SK-N-SH (cell line): ENCODE measurements at regions of chr2 and their contacts with region 1.

Region 1: DNA sequence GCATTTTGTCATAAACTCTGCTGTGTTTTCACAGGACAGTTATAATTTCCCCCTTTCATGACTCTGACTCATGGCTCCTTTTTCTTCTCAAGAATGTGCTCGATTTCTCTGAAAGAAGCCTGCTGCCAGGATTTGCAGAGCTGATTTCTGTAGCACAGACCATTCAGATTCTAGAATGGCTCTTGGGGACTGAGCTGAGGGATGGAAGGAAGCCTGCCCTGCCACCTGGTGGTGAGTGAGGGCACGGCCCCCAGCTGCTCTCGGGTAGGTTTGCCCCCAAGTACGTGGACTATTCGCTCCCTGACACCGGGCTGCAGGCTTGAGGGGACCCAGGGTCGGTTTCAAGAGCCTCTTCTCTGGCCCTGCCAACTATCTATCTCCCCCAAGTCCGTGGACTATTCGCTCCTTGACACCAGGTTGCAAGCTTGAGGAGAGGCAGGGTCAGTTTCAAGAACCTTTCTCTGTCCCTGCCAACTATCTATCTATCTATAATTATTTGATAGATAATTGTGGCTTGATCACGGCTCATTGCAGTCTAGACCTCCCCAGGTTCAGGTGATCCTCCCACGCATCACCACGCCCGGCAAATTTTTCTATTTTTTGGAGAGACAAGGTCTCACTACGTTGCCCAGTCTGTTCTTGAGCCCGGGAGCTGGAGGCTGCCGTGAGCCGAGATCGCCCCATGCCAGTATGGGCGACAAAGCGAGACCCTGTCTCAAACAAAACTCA is 1.4 kb upstream of the SMYD5 start:
- DNase-seq: peak; percentile 89
- H3K4me3 ChIP-seq: no peak overlapping the region; a peak in 1 of 4 replicates
- H3K27ac ChIP-seq: peak overlapping the region in 1 of 2 experiments; percentile 47; a peak in 1 of 4 replicates
- H3K4me1 ChIP-seq: peaks cover 3 to 10% of the 10 kb centered on the region in 2 experiments; a peak in 2 of 4 replicates
- H3K27me3 ChIP-seq: no peaks in the 10 kb centered on the region; the same call in 1 of the 2 replicates
- CTCF ChIP-seq: peak; percentile 91
- EP300 ChIP-seq: no peak
- RAD21 ChIP-seq: peak; percentile 69

Region 2: GRCh38 chr2:72745679-72746368 is 466.8 kb before region 1 on chr2:
- CTCF ChIA-PET with region 1: no interaction called
- POLR2A ChIA-PET with region 1: no interaction called
- DNase-seq: peak; percentile 21
- H3K4me3 ChIP-seq: no peak overlapping the region
- H3K27ac ChIP-seq: no peak overlapping the region
- H3K4me1 ChIP-seq: peaks cover 0 to 12% of the 10 kb centered on the region in 2 experiments; a peak in 1 of 4 replicates
- H3K27me3 ChIP-seq: no peaks in the 10 kb centered on the region
- CTCF ChIP-seq: peak; percentile 85
- EP300 ChIP-seq: no peak
- RAD21 ChIP-seq: peak; percentile 86

Region 3: DNA sequence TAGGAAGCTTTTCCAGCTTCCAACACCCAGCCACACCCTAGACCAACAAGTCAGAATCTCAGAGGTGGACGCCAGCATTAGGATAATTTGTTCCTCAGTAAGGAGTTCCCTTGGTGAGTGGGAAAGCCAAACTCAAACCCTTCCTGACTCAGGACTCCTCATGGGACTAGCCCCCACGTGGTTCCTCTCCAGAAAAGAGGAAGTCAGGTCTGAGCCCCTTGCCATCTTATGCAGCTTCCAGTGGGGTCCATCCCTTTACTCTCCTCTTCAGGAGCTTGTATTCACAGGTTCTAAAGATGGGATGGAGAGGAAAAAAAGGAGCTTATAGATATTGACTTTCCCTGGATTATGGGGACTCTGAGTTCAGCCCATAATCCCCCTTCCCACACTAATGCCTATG is 25.1 kb before region 1 on chr2:
- CTCF ChIA-PET with region 1: interaction called, 10 read pairs
- POLR2A ChIA-PET with region 1: interaction called, 3 read pairs
- DNase-seq: no peak
- H3K4me3 ChIP-seq: no peak overlapping the region
- H3K27ac ChIP-seq: no peak overlapping the region
- H3K4me1 ChIP-seq: no peaks in the 10 kb centered on the region
- H3K27me3 ChIP-seq: peaks cover 47% of the 10 kb centered on the region; the same call in 1 of the 2 replicates
- CTCF ChIP-seq: no peak
- EP300 ChIP-seq: no peak
- RAD21 ChIP-seq: no peak

Region 4: GRCh38 chr2:73202156-73203054 is 10.2 kb before region 1 on chr2 and contains the start of gene NOTO:
- CTCF ChIA-PET with region 1: interaction called, 19 read pairs
- POLR2A ChIA-PET with region 1: no interaction called
- DNase-seq: peak; percentile 73
- H3K4me3 ChIP-seq: no peak within 1 kb of the TSS
- H3K27ac ChIP-seq: no peak within 1 kb of the TSS
- H3K4me1 ChIP-seq: no peaks in the 10 kb centered on the region
- H3K27me3 ChIP-seq: peaks cover 72% of the 10 kb centered on the region
- CTCF ChIP-seq: no peak
- EP300 ChIP-seq: no peak
- RAD21 ChIP-seq: no peak
- polyA plus RNA-seq, gene NOTO: not detected in 2 replicates

Region 5: GRCh38 chr2:73225513-73226360 is 13.1 kb after region 1 on chr2:
- CTCF ChIA-PET with region 1: interaction called, 17 read pairs
- POLR2A ChIA-PET with region 1: no interaction called
- DNase-seq: no peak
- H3K4me3 ChIP-seq: no peak overlapping the region
- H3K27ac ChIP-seq: no peak overlapping the region
- H3K4me1 ChIP-seq: no peaks in the 10 kb centered on the region
- H3K27me3 ChIP-seq: no peaks in the 10 kb centered on the region
- CTCF ChIP-seq: no peak
- EP300 ChIP-seq: no peak
- RAD21 ChIP-seq: no peak

Region 6: GRCh38 chr2:73233154-73233931 is 20.7 kb after region 1 on chr2 and contains the start of gene PRADC1:
- CTCF ChIA-PET with region 1: interaction called, 16 read pairs
- POLR2A ChIA-PET with region 1: interaction called, 8 read pairs
- DNase-seq: peak; percentile 97
- H3K4me3 ChIP-seq: peak within 1 kb of the TSS; percentile 96 to 99
- H3K27ac ChIP-seq: peak within 1 kb of the TSS; percentile 91 to 95
- H3K4me1 ChIP-seq: peaks cover 0 to 20% of the 10 kb centered on the region in 2 experiments; a peak in 3 of 4 replicates
- H3K27me3 ChIP-seq: no peaks in the 10 kb centered on the region
- CTCF ChIP-seq: no peak
- EP300 ChIP-seq: no peak
- RAD21 ChIP-seq: no peak
- polyA plus RNA-seq, gene PRADC1: 8.5 and 9.6 TPM in 2 replicates